CD8-positive, alpha-beta T cell (primary cell): ENCODE measurements at regions of chr2 and their contacts with region 1.

Region 1: DNA sequence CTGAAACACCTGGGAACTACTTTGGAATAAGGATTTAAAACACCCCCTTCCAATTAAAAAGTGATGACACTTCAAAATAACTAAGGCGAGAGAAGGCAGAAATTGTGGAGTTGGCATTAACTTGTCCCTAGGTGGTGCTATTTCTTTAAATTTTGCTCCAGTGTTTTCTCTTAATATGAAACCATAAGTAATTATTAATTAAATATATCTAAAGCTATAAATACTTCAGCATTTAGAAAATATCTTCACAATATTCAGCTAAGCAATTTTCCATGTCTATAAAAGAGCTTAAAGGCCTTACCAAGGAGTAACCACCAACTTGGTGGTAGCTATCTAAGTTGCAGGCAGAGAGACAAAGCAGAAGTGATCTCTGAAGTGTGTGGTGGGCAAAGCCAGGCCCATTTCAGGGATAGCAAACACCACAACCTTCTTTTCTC is 186.8 kb upstream of the PGAP1 start:
- DNase-seq: peak in 2 of 9 experiments; percentile 54 to 69
- ATAC-seq: peak; percentile 52
- H3K4me3 ChIP-seq: no peak overlapping the region
- H3K4me3 Mint-ChIP-seq: no peak overlapping the region
- H3K27ac ChIP-seq: no peak overlapping the region
- H3K27ac Mint-ChIP-seq: peak overlapping the region; percentile 84
- H3K4me1 ChIP-seq: peaks cover 14% of the 10 kb centered on the region
- H3K4me1 Mint-ChIP-seq: peaks cover 35% of the 10 kb centered on the region
- H3K27me3 ChIP-seq: no peaks in the 10 kb centered on the region
- H3K27me3 Mint-ChIP-seq: no peaks in the 10 kb centered on the region
- CTCF ChIP-seq: peak; percentile 75

Region 2: GRCh38 chr2:197057959-197058358 is 55.3 kb before region 1 on chr2:
- CTCF ChIA-PET with region 1: no interaction called
- POLR2A ChIA-PET with region 1: no interaction called
- intact Hi-C with region 1: no loop called
- DNase-seq: no peak
- ATAC-seq: no peak
- H3K4me3 ChIP-seq: no peak overlapping the region
- H3K4me3 Mint-ChIP-seq: no peak overlapping the region
- H3K27ac ChIP-seq: no peak overlapping the region
- H3K27ac Mint-ChIP-seq: peak overlapping the region; percentile 18
- H3K4me1 ChIP-seq: no peaks in the 10 kb centered on the region
- H3K4me1 Mint-ChIP-seq: peaks cover 19% of the 10 kb centered on the region
- H3K27me3 ChIP-seq: no peaks in the 10 kb centered on the region
- H3K27me3 Mint-ChIP-seq: no peaks in the 10 kb centered on the region
- CTCF ChIP-seq: no peak

Region 3: DNA sequence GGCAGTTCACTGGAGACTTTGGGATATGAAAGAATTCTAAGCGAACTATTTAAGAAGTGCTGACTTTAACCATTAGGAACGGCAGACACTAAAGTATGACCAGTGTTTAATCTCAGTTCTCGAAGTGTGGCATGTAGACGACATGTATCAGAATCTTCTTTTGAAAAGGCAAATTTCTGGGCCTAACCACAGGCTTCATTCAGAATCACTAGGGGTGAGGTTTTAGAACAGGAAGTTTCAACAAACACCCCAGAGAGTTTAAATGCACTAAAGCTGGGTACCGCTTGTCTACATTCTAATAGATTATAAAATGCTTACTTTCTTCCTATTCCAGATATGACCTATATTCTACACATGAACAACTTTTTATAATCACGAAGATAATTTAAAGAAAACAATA is 17.0 kb after region 1 on chr2:
- CTCF ChIA-PET with region 1: interaction called, 36 read pairs
- POLR2A ChIA-PET with region 1: interaction called, 4 read pairs
- intact Hi-C with region 1: loop called in 1 of 2 experiments (anchors 2 kb)
- DNase-seq: peak in 3 of 9 experiments; percentile 21 to 65 (median 52)
- ATAC-seq: peak; percentile 87
- H3K4me3 ChIP-seq: peak overlapping the region in 1 of 2 experiments; percentile 13
- H3K4me3 Mint-ChIP-seq: peak overlapping the region; percentile 40
- H3K27ac ChIP-seq: peak overlapping the region in 1 of 2 experiments; percentile 28
- H3K27ac Mint-ChIP-seq: peak overlapping the region; percentile 92
- H3K4me1 ChIP-seq: peaks cover 57% of the 10 kb centered on the region
- H3K4me1 Mint-ChIP-seq: peaks cover 71% of the 10 kb centered on the region
- H3K27me3 ChIP-seq: no peaks in the 10 kb centered on the region
- H3K27me3 Mint-ChIP-seq: no peaks in the 10 kb centered on the region
- CTCF ChIP-seq: no peak

Region 4: DNA sequence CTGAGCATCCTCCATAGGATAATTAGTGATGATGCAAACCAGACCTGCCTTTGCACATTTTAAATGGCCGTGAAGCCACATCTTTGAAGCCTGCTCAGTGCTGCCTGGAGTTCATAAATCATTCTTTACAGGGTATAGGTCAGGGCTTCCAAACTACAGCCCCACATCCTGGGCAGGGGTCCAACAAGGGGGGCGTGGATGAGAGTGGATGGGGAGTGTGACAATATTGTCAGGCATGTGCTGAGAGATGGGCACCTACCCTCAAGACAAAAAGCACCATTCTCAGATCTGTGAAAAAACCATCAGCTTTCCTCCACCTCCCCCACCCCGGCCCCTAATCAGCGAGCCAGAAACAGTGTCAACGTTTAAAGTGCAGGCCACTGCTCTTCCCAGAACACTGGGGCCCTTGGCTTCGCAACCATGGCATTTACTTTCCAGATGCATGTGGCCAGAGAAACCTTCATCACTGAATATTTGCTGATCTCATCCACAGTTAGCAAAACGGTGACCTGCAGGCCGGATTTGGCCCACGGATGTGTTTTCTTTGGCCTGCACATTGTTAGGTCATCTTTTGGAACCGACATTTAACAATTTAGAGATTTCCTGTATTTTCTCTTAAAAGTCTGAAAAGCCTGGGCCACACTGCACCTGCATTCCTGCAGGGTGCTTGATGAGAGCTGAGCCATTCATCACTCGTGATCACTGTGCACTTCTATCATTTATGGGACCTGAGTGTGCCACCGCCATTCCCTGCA is 66.6 kb after region 1 on chr2:
- CTCF ChIA-PET with region 1: interaction called, 10 read pairs
- POLR2A ChIA-PET with region 1: no interaction called
- intact Hi-C with region 1: no loop called
- DNase-seq: no peak
- ATAC-seq: no peak
- H3K4me3 ChIP-seq: no peak overlapping the region
- H3K4me3 Mint-ChIP-seq: no peak overlapping the region
- H3K27ac ChIP-seq: no peak overlapping the region
- H3K27ac Mint-ChIP-seq: peak overlapping the region; percentile 82
- H3K4me1 ChIP-seq: peaks cover 37% of the 10 kb centered on the region
- H3K4me1 Mint-ChIP-seq: peaks cover 83% of the 10 kb centered on the region
- H3K27me3 ChIP-seq: no peaks in the 10 kb centered on the region
- H3K27me3 Mint-ChIP-seq: no peaks in the 10 kb centered on the region
- CTCF ChIP-seq: no peak

Region 5: DNA sequence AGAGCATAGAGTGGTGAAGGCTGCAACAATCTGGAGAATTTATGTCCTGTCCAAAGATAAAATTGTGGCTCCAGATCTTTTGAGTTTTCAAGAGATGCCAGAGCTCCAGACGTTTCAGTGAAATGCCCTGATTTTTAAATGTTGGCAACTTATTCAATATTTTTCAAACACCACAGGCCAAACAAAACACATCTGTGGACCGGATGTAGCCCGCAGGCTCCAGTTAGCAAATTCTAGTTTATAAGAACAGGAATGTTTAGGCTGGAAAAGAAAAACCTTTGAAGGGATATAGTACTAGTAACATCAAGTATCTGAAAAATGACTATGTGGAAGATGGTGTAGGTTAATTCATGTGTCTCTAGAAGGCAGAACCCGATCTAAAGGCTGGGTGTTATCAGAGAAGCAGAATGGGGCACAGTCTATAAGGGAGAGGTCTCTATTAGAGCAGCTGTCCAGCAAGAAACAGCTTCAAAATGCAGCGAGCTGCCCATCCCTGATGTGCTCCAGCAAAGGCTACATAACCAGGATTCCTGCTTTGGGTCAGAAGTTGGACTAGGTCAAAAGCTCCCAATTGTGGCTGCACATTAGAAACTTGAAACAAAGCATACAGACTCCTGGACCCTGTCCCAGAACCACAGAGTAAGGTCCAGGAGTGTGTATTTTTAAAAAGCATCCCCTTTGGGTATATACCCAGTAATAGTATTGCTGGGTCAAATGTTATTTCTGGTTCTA is 91.4 kb after region 1 on chr2:
- CTCF ChIA-PET with region 1: interaction called, 12 read pairs
- POLR2A ChIA-PET with region 1: no interaction called
- intact Hi-C with region 1: no loop called
- DNase-seq: no peak
- ATAC-seq: no peak
- H3K4me3 ChIP-seq: no peak overlapping the region
- H3K4me3 Mint-ChIP-seq: peak overlapping the region; percentile 12
- H3K27ac ChIP-seq: peak overlapping the region; percentile 87 to 89
- H3K27ac Mint-ChIP-seq: peak overlapping the region; percentile 100
- H3K4me1 ChIP-seq: peaks cover 94% of the 10 kb centered on the region
- H3K4me1 Mint-ChIP-seq: peaks cover 93% of the 10 kb centered on the region
- H3K27me3 ChIP-seq: no peaks in the 10 kb centered on the region
- H3K27me3 Mint-ChIP-seq: no peaks in the 10 kb centered on the region
- CTCF ChIP-seq: no peak

Region 6: GRCh38 chr2:197356136-197356535 is 242.8 kb after region 1 on chr2:
- CTCF ChIA-PET with region 1: interaction called, 16 read pairs
- POLR2A ChIA-PET with region 1: no interaction called
- intact Hi-C with region 1: no loop called
- DNase-seq: peak in 2 of 9 experiments; percentile 33 to 47
- ATAC-seq: peak; percentile 62
- H3K4me3 ChIP-seq: no peak overlapping the region
- H3K4me3 Mint-ChIP-seq: no peak overlapping the region
- H3K27ac ChIP-seq: no peak overlapping the region
- H3K27ac Mint-ChIP-seq: peak overlapping the region; percentile 28
- H3K4me1 ChIP-seq: peaks cover 15% of the 10 kb centered on the region
- H3K4me1 Mint-ChIP-seq: peaks cover 23% of the 10 kb centered on the region
- H3K27me3 ChIP-seq: no peaks in the 10 kb centered on the region
- H3K27me3 Mint-ChIP-seq: no peaks in the 10 kb centered on the region
- CTCF ChIP-seq: peak; percentile 50

Region 7: DNA sequence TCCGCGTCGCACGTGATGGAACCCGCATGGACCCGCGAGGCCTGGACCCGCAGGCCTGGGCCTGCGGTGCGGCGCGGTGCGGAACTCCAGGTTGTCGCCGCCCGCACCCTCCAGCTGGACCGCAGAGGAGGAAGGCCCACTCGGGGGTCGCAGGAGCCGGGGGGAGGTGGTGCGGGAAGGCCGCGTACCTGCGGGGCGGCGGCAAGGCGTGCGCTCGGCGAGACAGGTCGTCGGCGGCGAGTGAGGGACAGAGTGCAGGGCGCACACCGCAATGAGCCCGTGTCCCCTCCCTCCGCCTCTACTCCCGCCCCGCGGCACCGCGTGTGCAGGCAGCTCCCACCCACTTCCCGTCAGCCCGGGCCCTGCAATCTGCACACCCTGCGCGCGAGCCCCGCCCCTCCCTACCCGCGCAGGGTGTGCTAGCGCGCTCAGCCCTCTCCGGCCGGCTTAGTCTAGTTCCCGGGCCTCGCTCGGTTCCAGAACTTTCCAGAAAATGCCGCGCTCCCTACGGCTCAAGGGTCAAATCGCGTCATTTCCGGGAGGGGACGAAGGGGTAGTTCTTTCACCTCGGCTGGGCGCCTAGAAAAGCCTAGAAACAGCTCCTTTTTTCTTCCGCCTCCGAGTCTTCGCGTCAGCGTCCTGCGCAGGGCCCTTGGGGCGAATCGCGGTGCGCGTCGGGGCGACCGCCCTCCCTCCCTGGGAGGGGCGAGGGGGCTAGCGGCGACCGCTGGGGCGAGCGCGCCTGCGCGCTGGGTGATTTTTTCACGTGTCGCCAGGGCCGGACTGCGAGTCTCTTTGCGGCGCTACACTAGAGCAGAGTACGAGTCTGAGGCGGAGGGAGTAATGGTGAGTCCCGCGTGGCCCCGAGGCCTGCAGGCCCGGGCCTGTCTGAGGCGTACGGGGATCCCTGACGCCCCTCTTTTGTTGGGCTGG is 386.6 kb after region 1 on chr2 and contains the starts of genes HSPD1 and HSPE1:
- CTCF ChIA-PET with region 1: no interaction called
- POLR2A ChIA-PET with region 1: no interaction called
- intact Hi-C with region 1: loop called in 1 of 2 experiments (anchors 5 kb)
- DNase-seq: peak; percentile 93 to 99 (median 97)
- ATAC-seq: peak; percentile 86
- H3K4me3 ChIP-seq: peak within 1 kb of the TSS; percentile 61 to 76
- H3K4me3 Mint-ChIP-seq: peak within 1 kb of the TSS; percentile 92
- H3K27ac ChIP-seq: peak within 1 kb of the TSS; percentile 96
- H3K27ac Mint-ChIP-seq: peak within 1 kb of the TSS; percentile 97
- H3K4me1 ChIP-seq: peaks cover 55% of the 10 kb centered on the region
- H3K4me1 Mint-ChIP-seq: peaks cover 62% of the 10 kb centered on the region
- H3K27me3 ChIP-seq: no peaks in the 10 kb centered on the region
- H3K27me3 Mint-ChIP-seq: no peaks in the 10 kb centered on the region
- CTCF ChIP-seq: no peak
- total RNA-seq, gene HSPD1: 162 to 163 TPM
- total RNA-seq, gene HSPE1: 76.7 to 76.8 TPM